Prostate gland (tissue), 2 donors: ENCODE measurements at regions of chr2 and their contacts with region 1.

Region 1: GRCh38 chr2:62410015-62410453 is 96.0 kb downstream of the TMEM17 start:
- DNase-seq: no peak
- H3K4me3 ChIP-seq: no peak overlapping the region
- H3K27ac ChIP-seq: no peak overlapping the region
- H3K4me1 ChIP-seq: peaks cover 6% of the 10 kb centered on the region
- H3K27me3 ChIP-seq: no peaks in the 10 kb centered on the region
- CTCF ChIP-seq: no peak
- POLR2A ChIP-seq: no peak

Region 2: GRCh38 chr2:61993444-61994024 is 416.5 kb before region 1 on chr2:
- intact Hi-C with region 1: loop called (anchors 5 kb)
- DNase-seq: no peak
- H3K4me3 ChIP-seq: no peak overlapping the region
- H3K27ac ChIP-seq: no peak overlapping the region
- H3K4me1 ChIP-seq: no peaks in the 10 kb centered on the region
- H3K27me3 ChIP-seq: no peaks in the 10 kb centered on the region
- CTCF ChIP-seq: peak in 3 of 4 experiments; percentile 39 to 68 (median 56)
- POLR2A ChIP-seq: no peak

Region 3: GRCh38 chr2:62939735-62940491 is 529.9 kb after region 1 on chr2:
- intact Hi-C with region 1: no loop called
- DNase-seq: no peak
- H3K4me3 ChIP-seq: no peak overlapping the region
- H3K27ac ChIP-seq: no peak overlapping the region
- H3K4me1 ChIP-seq: no peaks in the 10 kb centered on the region
- H3K27me3 ChIP-seq: no peaks in the 10 kb centered on the region
- CTCF ChIP-seq: no peak
- POLR2A ChIP-seq: no peak